B cell (primary cell): ENCODE measurements at regions of chrX and their contacts with region 1.

Region 1: GRCh38 chrX:13487731-13488523 is 81.5 kb upstream of the EGFL6 start:
- DNase-seq: peak; percentile 70
- ATAC-seq: no peak
- H3K4me3 ChIP-seq: no peak overlapping the region
- H3K4me3 Mint-ChIP-seq: peak overlapping the region; percentile 56
- H3K27ac ChIP-seq: peak overlapping the region; percentile 84 to 90
- H3K27ac Mint-ChIP-seq: peak overlapping the region; percentile 91
- H3K4me1 ChIP-seq: peaks cover 18 to 22% of the 10 kb centered on the region in 2 donors
- H3K4me1 Mint-ChIP-seq: peaks cover 22% of the 10 kb centered on the region
- H3K27me3 ChIP-seq: peaks cover 0 to 4% (median 0%) of the 10 kb centered on the region in 4 experiments
- H3K27me3 Mint-ChIP-seq: no peaks in the 10 kb centered on the region
- CTCF ChIP-seq: peak; percentile 63

Region 2: GRCh38 chrX:12814420-12814819 is 673.5 kb before region 1 on chrX:
- CTCF ChIA-PET with region 1: interaction called, 18 read pairs
- POLR2A ChIA-PET with region 1: no interaction called
- intact Hi-C with region 1: no loop called
- DNase-seq: peak; percentile 70
- ATAC-seq: peak; percentile 68
- H3K4me3 ChIP-seq: no peak overlapping the region
- H3K4me3 Mint-ChIP-seq: no peak overlapping the region
- H3K27ac ChIP-seq: no peak overlapping the region
- H3K27ac Mint-ChIP-seq: no peak overlapping the region
- H3K4me1 ChIP-seq: no peaks in the 10 kb centered on the region
- H3K4me1 Mint-ChIP-seq: no peaks in the 10 kb centered on the region
- H3K27me3 ChIP-seq: no peaks in the 10 kb centered on the region
- H3K27me3 Mint-ChIP-seq: no peaks in the 10 kb centered on the region
- CTCF ChIP-seq: peak; percentile 68

Region 3: GRCh38 chrX:13151828-13152510 is 336.0 kb before region 1 on chrX:
- CTCF ChIA-PET with region 1: no interaction called
- POLR2A ChIA-PET with region 1: no interaction called
- intact Hi-C with region 1: no loop called
- DNase-seq: no peak
- ATAC-seq: no peak
- H3K4me3 ChIP-seq: no peak overlapping the region
- H3K4me3 Mint-ChIP-seq: no peak overlapping the region
- H3K27ac ChIP-seq: no peak overlapping the region
- H3K27ac Mint-ChIP-seq: no peak overlapping the region
- H3K4me1 ChIP-seq: no peaks in the 10 kb centered on the region
- H3K4me1 Mint-ChIP-seq: peaks cover 3% of the 10 kb centered on the region
- H3K27me3 ChIP-seq: no peaks in the 10 kb centered on the region
- H3K27me3 Mint-ChIP-seq: no peaks in the 10 kb centered on the region
- CTCF ChIP-seq: no peak

Region 4: DNA sequence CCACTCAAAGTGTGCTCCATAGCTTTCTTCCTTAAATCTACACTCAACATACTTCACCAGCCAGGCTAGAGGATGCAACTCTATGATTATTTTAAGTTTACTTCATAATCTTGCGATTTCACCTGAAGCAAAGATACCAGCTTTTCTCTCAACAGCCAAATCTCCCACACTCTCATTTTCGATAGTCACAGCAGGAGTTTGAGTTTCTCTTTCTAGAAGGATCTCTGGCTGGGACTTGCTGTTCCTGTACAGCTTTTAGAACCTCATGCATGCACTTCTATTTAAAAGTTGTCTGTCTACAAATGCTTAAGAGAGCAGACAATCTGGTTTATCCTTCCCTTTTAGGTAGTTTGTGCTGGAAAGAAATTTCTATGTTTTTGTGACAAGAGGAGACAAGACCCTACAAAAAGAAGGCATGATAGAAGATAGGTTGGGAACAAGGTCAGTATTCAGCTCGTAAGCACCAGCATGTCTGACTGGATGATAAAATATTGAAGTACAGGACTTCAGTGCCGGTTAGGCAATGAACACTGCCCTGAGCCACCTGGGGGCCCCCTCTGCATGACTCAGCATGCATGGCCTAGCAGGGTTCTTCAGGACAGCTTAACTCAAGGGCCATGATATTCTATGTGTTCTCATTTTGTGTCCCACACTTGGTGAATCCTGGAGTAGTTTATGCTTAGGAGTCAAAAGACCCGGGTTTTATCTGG is 233.7 kb before region 1 on chrX:
- CTCF ChIA-PET with region 1: interaction called, 24 read pairs
- POLR2A ChIA-PET with region 1: no interaction called
- intact Hi-C with region 1: no loop called
- DNase-seq: peak; percentile 23
- ATAC-seq: no peak
- H3K4me3 ChIP-seq: no peak overlapping the region
- H3K4me3 Mint-ChIP-seq: peak overlapping the region; percentile 40
- H3K27ac ChIP-seq: peak overlapping the region; percentile 16 to 38
- H3K27ac Mint-ChIP-seq: peak overlapping the region; percentile 54
- H3K4me1 ChIP-seq: peaks cover 54 to 66% of the 10 kb centered on the region in 2 donors
- H3K4me1 Mint-ChIP-seq: peaks cover 64% of the 10 kb centered on the region
- H3K27me3 ChIP-seq: no peaks in the 10 kb centered on the region
- H3K27me3 Mint-ChIP-seq: no peaks in the 10 kb centered on the region
- CTCF ChIP-seq: no peak

Region 5: GRCh38 chrX:13263560-13264251 is 224.2 kb before region 1 on chrX:
- CTCF ChIA-PET with region 1: interaction called, 3 read pairs
- POLR2A ChIA-PET with region 1: no interaction called
- intact Hi-C with region 1: loop called (anchors 5 kb)
- DNase-seq: peak; percentile 58
- ATAC-seq: peak; percentile 88
- H3K4me3 ChIP-seq: peak overlapping the region in 1 of 5 experiments; percentile 12
- H3K4me3 Mint-ChIP-seq: peak overlapping the region; percentile 66
- H3K27ac ChIP-seq: peak overlapping the region; percentile 56 to 72
- H3K27ac Mint-ChIP-seq: no peak overlapping the region
- H3K4me1 ChIP-seq: peaks cover 23 to 27% of the 10 kb centered on the region in 2 donors
- H3K4me1 Mint-ChIP-seq: peaks cover 18% of the 10 kb centered on the region
- H3K27me3 ChIP-seq: no peaks in the 10 kb centered on the region
- H3K27me3 Mint-ChIP-seq: no peaks in the 10 kb centered on the region
- CTCF ChIP-seq: no peak

Region 6: GRCh38 chrX:13283950-13284914 is 203.7 kb before region 1 on chrX:
- CTCF ChIA-PET with region 1: interaction called, 18 read pairs
- POLR2A ChIA-PET with region 1: no interaction called
- intact Hi-C with region 1: loop called (anchors 2 kb)
- DNase-seq: no peak
- ATAC-seq: no peak
- H3K4me3 ChIP-seq: no peak overlapping the region
- H3K4me3 Mint-ChIP-seq: no peak overlapping the region
- H3K27ac ChIP-seq: peak overlapping the region; percentile 29 to 60
- H3K27ac Mint-ChIP-seq: peak overlapping the region; percentile 88
- H3K4me1 ChIP-seq: peaks cover 11 to 13% of the 10 kb centered on the region in 2 donors
- H3K4me1 Mint-ChIP-seq: peaks cover 10% of the 10 kb centered on the region
- H3K27me3 ChIP-seq: no peaks in the 10 kb centered on the region
- H3K27me3 Mint-ChIP-seq: no peaks in the 10 kb centered on the region
- CTCF ChIP-seq: no peak

Region 7: DNA sequence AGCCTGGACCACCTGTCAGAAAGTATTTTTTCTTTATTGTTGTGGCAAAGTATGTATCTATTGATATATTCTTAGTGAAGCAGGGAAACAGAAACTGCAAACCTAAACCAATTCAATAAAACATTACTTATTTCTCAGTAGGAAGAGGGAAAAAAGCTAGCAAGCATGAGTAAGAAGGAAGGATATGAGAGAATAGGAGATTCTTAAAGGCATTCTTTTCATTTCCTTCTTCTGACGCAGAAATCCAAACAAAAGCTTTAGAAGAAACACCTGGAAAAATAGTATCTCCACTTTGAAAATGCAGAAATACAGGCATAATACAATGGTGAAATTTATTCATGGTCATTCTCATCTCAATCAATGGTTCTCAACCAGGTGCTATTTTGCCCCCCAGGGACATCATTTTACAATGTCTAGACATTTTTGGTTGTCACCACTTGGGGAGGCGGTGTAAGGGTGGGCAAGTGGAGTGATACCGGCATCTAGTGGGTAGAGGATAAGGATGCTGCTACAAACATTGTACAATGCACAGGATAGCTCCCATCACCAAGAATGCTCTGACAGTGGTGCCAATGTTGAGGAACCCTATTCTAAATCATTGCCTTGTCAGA is 146.3 kb before region 1 on chrX:
- CTCF ChIA-PET with region 1: interaction called, 3 read pairs
- POLR2A ChIA-PET with region 1: no interaction called
- intact Hi-C with region 1: loop called (anchors 5 kb)
- DNase-seq: no peak
- ATAC-seq: no peak
- H3K4me3 ChIP-seq: no peak overlapping the region
- H3K4me3 Mint-ChIP-seq: no peak overlapping the region
- H3K27ac ChIP-seq: no peak overlapping the region
- H3K27ac Mint-ChIP-seq: no peak overlapping the region
- H3K4me1 ChIP-seq: peaks cover 15 to 23% of the 10 kb centered on the region in 2 donors
- H3K4me1 Mint-ChIP-seq: peaks cover 19% of the 10 kb centered on the region
- H3K27me3 ChIP-seq: no peaks in the 10 kb centered on the region
- H3K27me3 Mint-ChIP-seq: no peaks in the 10 kb centered on the region
- CTCF ChIP-seq: no peak

Region 8: DNA sequence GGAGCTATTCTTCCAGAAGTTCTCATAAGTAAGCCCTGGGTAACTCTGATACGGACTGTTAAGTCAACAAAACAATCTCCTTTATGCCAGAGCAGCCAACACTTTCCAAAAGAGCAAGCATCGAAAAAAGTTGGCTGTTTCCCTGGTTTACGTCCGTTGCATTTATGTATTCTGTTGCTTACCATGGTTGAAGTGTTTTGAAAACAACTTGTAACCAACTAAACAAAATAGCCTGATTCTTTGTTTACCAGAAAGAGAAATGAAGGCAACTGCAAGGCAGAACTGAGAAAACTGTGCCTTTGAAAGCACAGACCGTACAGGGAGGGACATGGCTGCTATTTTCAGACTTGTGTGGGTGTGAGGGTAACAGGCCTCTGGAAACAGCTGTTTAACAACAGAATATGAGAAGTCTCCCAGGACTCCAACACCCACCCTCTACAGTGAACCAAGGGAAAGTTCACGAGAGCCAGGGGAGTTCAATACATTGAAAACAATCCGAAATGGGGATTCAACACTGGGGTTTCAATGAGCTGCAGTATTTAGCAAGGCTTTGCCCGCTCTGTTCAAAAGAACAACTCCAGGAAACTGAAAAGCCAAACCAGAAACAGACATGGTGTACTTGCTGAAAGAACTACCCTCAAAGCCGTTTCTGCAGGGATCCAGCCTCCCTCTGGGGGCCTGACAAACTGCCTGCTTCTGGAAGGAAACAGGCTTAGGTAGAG is 14.3 kb before region 1 on chrX:
- CTCF ChIA-PET with region 1: interaction called, 15 read pairs
- POLR2A ChIA-PET with region 1: no interaction called
- intact Hi-C with region 1: loop called (anchors 2 kb)
- DNase-seq: peak; percentile 55
- ATAC-seq: peak; percentile 77
- H3K4me3 ChIP-seq: peak overlapping the region; percentile 5 to 54 (median 34)
- H3K4me3 Mint-ChIP-seq: peak overlapping the region; percentile 87
- H3K27ac ChIP-seq: peak overlapping the region; percentile 91 to 97
- H3K27ac Mint-ChIP-seq: peak overlapping the region; percentile 99
- H3K4me1 ChIP-seq: peaks cover 46 to 53% of the 10 kb centered on the region in 2 donors
- H3K4me1 Mint-ChIP-seq: peaks cover 58% of the 10 kb centered on the region
- H3K27me3 ChIP-seq: no peaks in the 10 kb centered on the region
- H3K27me3 Mint-ChIP-seq: no peaks in the 10 kb centered on the region
- CTCF ChIP-seq: no peak